ENCODE measurements at regions of chr19 and their contacts with region 1.

Region 1: GRCh38 chr19:27720155-27720554 is 1492.8 kb downstream of the UQCRFS1 start:
- DNase-seq: no peak
- H3K4me3 ChIP-seq: no peak overlapping the region
- H3K4me3 Mint-ChIP-seq: no peak overlapping the region
- H3K27ac Mint-ChIP-seq: no peak overlapping the region
- H3K4me1 ChIP-seq: no peaks in the 10 kb centered on the region
- H3K4me1 Mint-ChIP-seq: no peaks in the 10 kb centered on the region
- H3K27me3 ChIP-seq: no peaks in the 10 kb centered on the region
- H3K27me3 Mint-ChIP-seq: no peaks in the 10 kb centered on the region
- CTCF ChIP-seq: no peak

Region 2: GRCh38 chr19:27689734-27690241 is 30.4 kb before region 1 on chr19:
- CTCF ChIA-PET with region 1: no interaction called
- POLR2A ChIA-PET with region 1: no interaction called
- intact Hi-C with region 1: loop called (anchors 1 kb)
- DNase-seq: no peak
- H3K4me3 ChIP-seq: no peak overlapping the region
- H3K4me3 Mint-ChIP-seq: no peak overlapping the region
- H3K27ac Mint-ChIP-seq: no peak overlapping the region
- H3K4me1 ChIP-seq: no peaks in the 10 kb centered on the region
- H3K4me1 Mint-ChIP-seq: no peaks in the 10 kb centered on the region
- H3K27me3 ChIP-seq: no peaks in the 10 kb centered on the region
- H3K27me3 Mint-ChIP-seq: no peaks in the 10 kb centered on the region
- CTCF ChIP-seq: no peak

Region 3: DNA sequence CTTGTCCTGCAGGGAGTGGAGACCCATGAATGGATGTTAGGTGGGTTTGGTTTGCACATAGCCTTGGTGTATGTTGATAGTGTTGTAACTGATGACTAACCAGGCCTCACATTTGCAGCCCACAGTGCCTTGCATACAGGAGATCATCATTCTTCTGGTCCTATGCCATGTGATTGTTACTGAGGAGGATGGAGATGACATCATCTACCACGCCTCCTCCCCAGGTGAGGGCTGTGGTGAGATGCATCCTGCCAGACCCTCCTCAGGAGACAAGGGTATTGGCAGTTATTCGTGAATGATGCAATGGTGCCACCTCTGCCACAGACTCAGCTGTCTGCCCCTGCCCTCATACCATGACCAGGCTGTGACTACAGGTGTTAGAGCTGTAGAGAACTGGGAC is 198.7 kb after region 1 on chr19:
- CTCF ChIA-PET with region 1: no interaction called
- POLR2A ChIA-PET with region 1: no interaction called
- intact Hi-C with region 1: no loop called
- DNase-seq: no peak
- H3K4me3 ChIP-seq: no peak overlapping the region
- H3K4me3 Mint-ChIP-seq: no peak overlapping the region
- H3K27ac Mint-ChIP-seq: no peak overlapping the region
- H3K4me1 ChIP-seq: no peaks in the 10 kb centered on the region
- H3K4me1 Mint-ChIP-seq: no peaks in the 10 kb centered on the region
- H3K27me3 ChIP-seq: no peaks in the 10 kb centered on the region
- H3K27me3 Mint-ChIP-seq: no peaks in the 10 kb centered on the region
- CTCF ChIP-seq: no peak